Activated CD8-positive, alpha-beta T cell treated with anti-CD3 and anti-CD28 coated beads for 36 hours (primary cell): ENCODE measurements at regions of chr5 and their contacts with region 1.

Region 1: GRCh38 chr5:112995764-112996618 is 19.4 kb downstream of the DCP2 start:
- DNase-seq: peak; percentile 85
- ATAC-seq: peak; percentile 94
- H3K4me3 Mint-ChIP-seq: no peak overlapping the region
- H3K27ac Mint-ChIP-seq: no peak overlapping the region
- H3K4me1 Mint-ChIP-seq: peaks cover 25% of the 10 kb centered on the region
- H3K27me3 Mint-ChIP-seq: no peaks in the 10 kb centered on the region
- CTCF ChIP-seq: peak; percentile 98

Region 2: DNA sequence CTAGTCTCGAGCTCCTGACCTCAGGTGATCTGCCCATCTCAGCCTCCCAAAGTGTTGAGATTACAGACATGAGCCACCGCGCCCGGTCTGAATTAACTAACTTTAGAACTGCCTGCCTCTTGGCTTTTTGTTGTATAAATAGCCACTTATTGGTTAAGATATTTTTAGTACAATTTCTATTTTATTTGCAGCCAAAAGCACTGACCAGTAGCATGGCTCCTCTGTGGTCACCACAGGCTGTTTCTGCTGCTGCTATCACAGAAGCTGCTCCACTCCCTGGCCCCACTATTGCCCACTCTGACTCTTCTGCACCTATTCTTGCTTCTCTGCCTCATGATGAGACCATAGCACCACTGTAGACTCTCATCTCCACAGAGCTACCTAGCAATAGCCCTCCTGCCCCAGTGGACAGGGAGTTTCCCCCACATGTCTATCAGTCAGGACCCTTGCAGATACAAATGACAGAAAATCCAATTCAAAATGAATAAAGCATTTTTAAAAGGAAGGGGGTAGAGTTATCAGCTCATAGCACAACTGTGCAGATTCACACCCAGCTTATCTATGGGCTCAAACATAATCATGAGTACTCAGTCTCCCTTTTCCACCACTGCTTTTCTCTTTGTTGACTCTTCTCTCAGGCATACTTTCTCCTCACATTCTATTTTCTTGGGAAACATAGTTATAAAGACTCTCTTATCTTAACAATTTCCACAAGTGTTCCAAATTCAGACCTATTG is 425.1 kb before region 1 on chr5:
- CTCF ChIA-PET with region 1: no interaction called
- POLR2A ChIA-PET with region 1: no interaction called
- intact Hi-C with region 1: no loop called
- DNase-seq: no peak
- ATAC-seq: no peak
- H3K4me3 Mint-ChIP-seq: no peak overlapping the region
- H3K27ac Mint-ChIP-seq: no peak overlapping the region
- H3K4me1 Mint-ChIP-seq: no peaks in the 10 kb centered on the region
- H3K27me3 Mint-ChIP-seq: peaks cover 5% of the 10 kb centered on the region
- CTCF ChIP-seq: no peak

Region 3: DNA sequence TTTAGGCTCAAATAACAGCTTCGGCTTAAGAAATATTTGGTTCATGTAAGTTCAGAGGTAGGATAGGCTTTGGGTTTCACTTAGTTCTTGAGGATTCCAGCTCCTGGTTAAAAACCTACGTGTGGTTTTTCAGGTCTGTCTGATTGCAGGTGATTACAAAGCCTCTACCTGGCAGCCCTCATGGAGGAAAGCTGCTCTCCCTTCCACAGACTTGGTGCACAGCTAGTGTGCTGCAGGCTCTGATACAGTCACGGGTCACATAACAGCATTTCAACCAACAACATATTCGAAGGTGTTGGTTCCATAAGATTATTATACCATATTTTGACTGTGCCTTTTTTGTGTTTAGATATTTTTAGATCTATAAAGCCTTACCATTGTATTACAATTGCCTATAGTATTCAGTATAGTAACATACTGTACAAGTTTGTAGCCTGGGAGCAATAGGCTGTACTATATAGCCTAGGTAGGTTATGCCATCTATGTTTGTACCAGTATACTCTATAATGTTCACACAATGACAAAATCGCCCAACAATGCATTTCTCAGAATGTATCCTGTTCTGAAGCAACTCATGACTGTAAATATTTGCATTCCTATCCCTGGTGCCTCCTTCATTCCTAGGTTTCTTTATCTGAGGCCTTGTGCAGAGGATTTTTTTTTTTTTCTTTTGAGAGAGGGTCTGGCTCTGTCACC is 27.4 kb before region 1 on chr5:
- CTCF ChIA-PET with region 1: interaction called, 11 read pairs
- POLR2A ChIA-PET with region 1: no interaction called
- intact Hi-C with region 1: no loop called
- DNase-seq: no peak
- ATAC-seq: no peak
- H3K4me3 Mint-ChIP-seq: no peak overlapping the region
- H3K27ac Mint-ChIP-seq: no peak overlapping the region
- H3K4me1 Mint-ChIP-seq: peaks cover 20% of the 10 kb centered on the region
- H3K27me3 Mint-ChIP-seq: no peaks in the 10 kb centered on the region
- CTCF ChIP-seq: no peak

Region 4: DNA sequence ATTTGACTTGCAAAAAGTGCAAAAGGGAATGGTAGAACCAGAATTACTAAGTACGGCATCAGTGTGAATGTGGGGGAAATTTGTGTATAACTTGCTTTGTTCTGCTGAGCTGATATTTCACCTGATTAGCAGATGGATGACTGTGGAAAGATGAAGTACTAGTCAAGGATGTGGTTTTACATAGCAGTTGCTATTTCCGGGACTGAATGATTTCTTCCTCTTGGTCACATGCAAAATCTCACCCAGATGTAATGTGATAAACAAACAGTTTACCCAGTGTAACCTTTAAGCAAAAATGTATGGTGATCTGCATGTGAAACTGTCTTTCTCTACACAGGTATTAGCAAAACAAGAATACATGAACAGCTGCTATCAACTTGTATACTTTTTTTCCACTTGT is 26.7 kb after region 1 on chr5:
- CTCF ChIA-PET with region 1: interaction called, 51 read pairs
- POLR2A ChIA-PET with region 1: interaction called, 3 read pairs
- intact Hi-C with region 1: no loop called
- DNase-seq: no peak
- ATAC-seq: peak; percentile 86
- H3K4me3 Mint-ChIP-seq: no peak overlapping the region
- H3K27ac Mint-ChIP-seq: peak overlapping the region; percentile 57
- H3K4me1 Mint-ChIP-seq: peaks cover 58% of the 10 kb centered on the region
- H3K27me3 Mint-ChIP-seq: no peaks in the 10 kb centered on the region
- CTCF ChIP-seq: no peak

Region 5: GRCh38 chr5:113043491-113043931 is 47.5 kb after region 1 on chr5:
- CTCF ChIA-PET with region 1: interaction called, 15 read pairs
- POLR2A ChIA-PET with region 1: no interaction called
- intact Hi-C with region 1: no loop called
- DNase-seq: peak; percentile 59
- ATAC-seq: peak; percentile 45
- H3K4me3 Mint-ChIP-seq: no peak overlapping the region
- H3K27ac Mint-ChIP-seq: no peak overlapping the region
- H3K4me1 Mint-ChIP-seq: no peaks in the 10 kb centered on the region
- H3K27me3 Mint-ChIP-seq: no peaks in the 10 kb centered on the region
- CTCF ChIP-seq: peak; percentile 63

Region 6: DNA sequence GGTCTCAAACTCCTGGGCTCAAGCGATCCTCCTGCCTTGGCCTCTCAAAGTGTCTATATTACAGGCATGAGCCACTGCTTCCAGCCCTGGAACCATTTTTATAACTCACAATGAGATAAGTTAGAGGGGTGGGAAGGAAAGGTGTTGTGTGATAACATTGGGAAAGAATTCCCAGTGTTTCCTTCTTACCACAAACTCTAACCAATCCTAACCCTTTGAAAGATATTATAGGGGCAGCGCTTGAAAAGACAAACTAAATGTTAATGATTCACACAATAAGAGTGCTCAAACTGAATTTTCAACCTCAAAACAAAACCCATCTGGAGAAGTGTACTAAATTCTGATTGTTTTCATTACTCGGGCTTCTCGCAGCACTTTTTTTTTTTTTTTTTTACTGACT is 329.1 kb after region 1 on chr5:
- CTCF ChIA-PET with region 1: interaction called, 31 read pairs
- POLR2A ChIA-PET with region 1: no interaction called
- intact Hi-C with region 1: loop called (anchors 5 kb)
- DNase-seq: no peak
- ATAC-seq: no peak
- H3K4me3 Mint-ChIP-seq: no peak overlapping the region
- H3K27ac Mint-ChIP-seq: no peak overlapping the region
- H3K4me1 Mint-ChIP-seq: no peaks in the 10 kb centered on the region
- H3K27me3 Mint-ChIP-seq: no peaks in the 10 kb centered on the region
- CTCF ChIP-seq: no peak

Region 7: DNA sequence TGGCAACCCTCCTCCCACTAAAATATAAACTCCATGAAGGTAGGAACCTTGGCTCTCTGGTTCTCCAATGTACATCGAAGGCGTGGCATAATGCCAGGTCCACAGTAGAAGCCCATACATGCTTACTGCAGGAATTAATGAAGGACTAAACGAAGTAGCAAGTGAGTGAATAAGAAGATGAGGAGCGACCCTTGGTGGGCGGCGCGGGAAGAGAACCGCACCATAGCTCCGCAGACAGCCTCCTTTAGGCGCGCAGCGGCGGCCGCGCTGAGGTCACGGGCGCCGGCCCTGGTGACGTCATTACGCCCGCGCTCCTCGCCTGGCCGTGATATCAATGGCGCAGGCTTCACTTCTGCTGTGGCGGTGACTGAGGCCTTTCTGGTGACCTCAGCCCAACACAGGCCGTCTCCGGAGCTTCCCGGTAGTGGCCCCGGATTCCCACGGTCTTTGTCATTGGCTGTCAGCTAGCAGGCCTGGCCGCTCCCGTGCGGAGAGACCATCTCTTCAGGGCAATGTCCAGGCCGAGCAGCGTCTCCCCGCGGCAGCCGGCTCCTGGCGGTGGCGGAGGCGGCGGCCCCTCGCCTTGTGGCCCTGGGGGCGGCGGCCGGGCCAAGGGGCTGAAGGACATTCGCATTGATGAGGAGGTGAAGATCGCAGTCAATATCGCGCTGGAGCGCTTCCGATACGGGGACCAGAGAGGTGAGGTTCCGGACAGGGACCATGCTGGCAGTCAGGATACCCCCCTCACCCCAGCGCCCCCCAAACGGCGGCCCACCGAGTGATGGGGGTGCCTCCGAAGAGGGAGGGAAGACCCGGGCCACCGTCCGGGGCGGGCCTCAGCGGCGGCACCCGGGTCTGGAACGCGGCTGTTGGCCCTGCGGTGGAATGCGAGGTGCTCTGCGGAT is 517.6 kb after region 1 on chr5 and contains the start of gene YTHDC2:
- CTCF ChIA-PET with region 1: interaction called, 18 read pairs
- POLR2A ChIA-PET with region 1: no interaction called
- intact Hi-C with region 1: no loop called
- DNase-seq: peak; percentile 92
- ATAC-seq: peak; percentile 94
- H3K4me3 Mint-ChIP-seq: peak within 1 kb of the TSS; percentile 93
- H3K27ac Mint-ChIP-seq: peak within 1 kb of the TSS; percentile 93
- H3K4me1 Mint-ChIP-seq: peaks cover 25% of the 10 kb centered on the region
- H3K27me3 Mint-ChIP-seq: peaks cover 7% of the 10 kb centered on the region
- CTCF ChIP-seq: no peak
- total RNA-seq, gene YTHDC2: 26.8 to 28.2 TPM